Mammary epithelial cell (primary cell): ENCODE measurements at regions of chr11 and their contacts with region 1.

Region 1: GRCh38 chr11:112280268-112281126 is 19.8 kb upstream of the PLET1 start:
- DNase-seq: peak; percentile 68
- H3K4me3 ChIP-seq: peak overlapping the region; percentile 31 to 45 (median 39)
- H3K27ac ChIP-seq: no peak overlapping the region
- H3K4me1 ChIP-seq: peaks cover 12% of the 10 kb centered on the region
- H3K27me3 ChIP-seq: no peaks in the 10 kb centered on the region
- CTCF ChIP-seq: peak; percentile 74 to 86

Region 2: DNA sequence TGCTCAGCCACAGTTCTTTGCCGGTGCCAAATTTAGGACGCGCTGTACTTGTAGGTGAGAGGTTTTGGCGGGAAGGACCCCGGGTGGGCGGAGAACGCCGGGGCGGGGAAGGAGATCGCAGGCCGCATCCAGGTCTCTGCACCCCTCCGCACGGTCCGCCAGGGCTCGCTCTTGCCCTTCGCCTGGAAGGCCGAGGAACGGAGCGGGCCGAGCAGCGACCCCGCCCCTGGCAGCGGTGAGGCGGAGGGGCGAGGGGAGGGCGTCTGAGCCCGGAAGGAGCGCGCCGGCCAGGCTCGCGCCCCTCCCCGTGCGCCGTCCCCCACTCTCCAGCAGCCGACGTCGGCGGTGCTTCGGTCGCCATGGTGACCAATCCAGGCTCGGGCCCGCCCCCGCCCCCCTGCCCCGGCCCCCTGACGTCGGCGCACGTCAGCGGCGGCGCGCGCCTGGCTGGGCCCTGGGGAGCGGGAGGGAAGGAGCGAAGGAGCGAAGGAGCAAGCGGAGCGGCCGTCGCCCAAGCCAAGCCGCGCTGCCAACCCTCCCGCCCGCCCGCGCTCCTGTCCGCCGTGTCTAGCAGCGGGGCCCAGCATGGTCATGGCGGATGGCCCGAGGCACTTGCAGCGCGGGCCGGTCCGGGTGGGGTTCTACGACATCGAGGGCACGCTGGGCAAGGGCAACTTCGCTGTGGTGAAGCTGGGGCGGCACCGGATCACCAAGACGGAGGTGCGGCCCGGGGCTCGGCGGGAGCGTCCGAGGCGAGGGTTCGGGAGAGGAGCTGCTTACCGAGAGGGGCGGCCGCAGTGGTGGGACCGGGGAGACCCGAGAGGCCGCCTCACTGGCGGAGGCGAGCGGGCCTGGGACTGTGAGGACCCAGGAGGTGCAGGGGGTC is 678.3 kb before region 1 on chr11 and contains the start of gene SIK2:
- CTCF ChIA-PET with region 1: no interaction called
- dilution Hi-C with region 1: no loop called
- in situ Hi-C with region 1: no loop called
- intact Hi-C with region 1: loop called (anchors 5 kb)
- DNase-seq: peak; percentile 94
- H3K4me3 ChIP-seq: peak within 1 kb of the TSS; percentile 91 to 98 (median 98)
- H3K27ac ChIP-seq: peak within 1 kb of the TSS; percentile 94
- H3K4me1 ChIP-seq: peaks cover 21% of the 10 kb centered on the region
- H3K27me3 ChIP-seq: no peaks in the 10 kb centered on the region
- CTCF ChIP-seq: peak; percentile 79 to 97
- total RNA-seq, gene SIK2: 15.9 to 17.0 TPM

Region 3: GRCh38 chr11:111932611-111932950 is 347.9 kb before region 1 on chr11:
- CTCF ChIA-PET with region 1: interaction called, 3 read pairs
- dilution Hi-C with region 1: no loop called
- in situ Hi-C with region 1: no loop called
- intact Hi-C with region 1: loop called (anchors 2 kb)
- DNase-seq: no peak
- H3K4me3 ChIP-seq: no peak overlapping the region
- H3K27ac ChIP-seq: no peak overlapping the region
- H3K4me1 ChIP-seq: peaks cover 10% of the 10 kb centered on the region
- H3K27me3 ChIP-seq: no peaks in the 10 kb centered on the region
- CTCF ChIP-seq: no peak

Region 4: GRCh38 chr11:112113539-112114457 is 166.7 kb before region 1 on chr11:
- CTCF ChIA-PET with region 1: interaction called, 3 read pairs
- dilution Hi-C with region 1: no loop called
- in situ Hi-C with region 1: loop called in 1 of 2 experiments (anchors 10 kb)
- intact Hi-C with region 1: loop called (anchors 1 kb)
- DNase-seq: peak; percentile 54
- H3K4me3 ChIP-seq: no peak overlapping the region
- H3K27ac ChIP-seq: no peak overlapping the region
- H3K4me1 ChIP-seq: no peaks in the 10 kb centered on the region
- H3K27me3 ChIP-seq: no peaks in the 10 kb centered on the region
- CTCF ChIP-seq: peak; percentile 37 to 70

Region 5: DNA sequence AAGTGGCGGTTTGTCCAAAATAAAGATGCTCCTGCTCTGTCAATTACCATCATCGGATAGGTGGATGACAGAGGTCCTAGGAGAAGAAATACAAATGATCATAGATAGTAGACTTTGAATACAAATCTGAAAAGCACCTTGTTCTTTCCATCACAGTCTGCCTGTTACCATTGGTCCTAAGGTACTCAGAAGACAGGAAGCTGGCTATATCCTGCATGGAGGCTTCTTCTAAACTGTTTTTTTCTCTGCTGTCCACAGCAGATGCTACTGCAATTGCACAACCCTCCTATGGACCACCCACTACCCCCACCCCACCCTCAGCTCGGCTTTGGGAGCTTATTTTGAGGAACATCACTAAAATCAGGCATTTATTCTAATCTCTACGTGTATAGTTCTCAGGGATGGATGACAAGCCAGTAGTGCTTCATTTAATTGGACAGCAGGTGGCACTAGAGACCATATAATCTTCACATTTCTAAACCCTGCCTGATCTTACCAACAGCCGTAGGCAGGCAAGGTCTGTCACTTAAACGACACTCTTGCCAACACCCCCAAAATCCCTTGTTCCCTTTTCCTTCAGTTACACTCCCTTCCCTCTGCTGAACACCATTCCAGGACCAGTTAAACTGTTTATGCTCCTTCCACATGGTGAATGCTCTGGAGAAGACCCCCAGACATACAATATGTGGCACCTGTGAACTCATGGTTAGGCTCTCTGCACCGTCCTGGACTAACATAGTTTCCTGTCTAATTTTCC is 60.8 kb before region 1 on chr11:
- CTCF ChIA-PET with region 1: interaction called, 23 read pairs
- dilution Hi-C with region 1: loop called (anchors 5 kb)
- in situ Hi-C with region 1: loop called (anchors 5 kb)
- intact Hi-C with region 1: loop called (anchors 1 kb)
- DNase-seq: peak; percentile 53
- H3K4me3 ChIP-seq: no peak overlapping the region
- H3K27ac ChIP-seq: no peak overlapping the region
- H3K4me1 ChIP-seq: peaks cover 6% of the 10 kb centered on the region
- H3K27me3 ChIP-seq: no peaks in the 10 kb centered on the region
- CTCF ChIP-seq: peak; percentile 63 to 64

Region 6: DNA sequence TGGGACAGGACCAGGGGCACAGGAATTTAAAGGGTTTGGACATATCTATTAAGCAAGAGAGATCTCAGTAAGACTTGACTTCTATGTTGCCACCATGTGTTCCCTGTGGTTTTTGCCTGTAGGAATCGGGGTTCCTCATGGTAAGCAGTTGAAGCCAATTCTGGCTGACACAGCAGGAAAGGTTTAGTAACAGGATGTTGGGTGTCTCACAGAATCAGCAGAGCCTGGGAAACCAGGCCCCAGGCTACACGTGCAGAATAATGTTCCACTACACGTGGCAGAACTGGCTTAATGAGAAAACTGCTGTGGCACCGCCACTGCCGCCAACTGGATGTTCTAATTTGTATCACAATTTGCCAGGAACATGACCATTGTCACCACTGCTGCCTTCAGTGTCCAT is 244.8 kb after region 1 on chr11:
- CTCF ChIA-PET with region 1: interaction called, 11 read pairs
- dilution Hi-C with region 1: no loop called
- in situ Hi-C with region 1: no loop called
- intact Hi-C with region 1: no loop called
- DNase-seq: peak; percentile 35
- H3K4me3 ChIP-seq: no peak overlapping the region
- H3K27ac ChIP-seq: no peak overlapping the region
- H3K4me1 ChIP-seq: no peaks in the 10 kb centered on the region
- H3K27me3 ChIP-seq: peaks cover 1% of the 10 kb centered on the region
- CTCF ChIP-seq: no peak

Region 7: GRCh38 chr11:113289431-113290187 is 1009.1 kb after region 1 on chr11:
- CTCF ChIA-PET with region 1: no interaction called
- dilution Hi-C with region 1: no loop called
- in situ Hi-C with region 1: loop called in 1 of 2 experiments (anchors 25 kb)
- intact Hi-C with region 1: no loop called
- DNase-seq: peak; percentile 41
- H3K4me3 ChIP-seq: no peak overlapping the region
- H3K27ac ChIP-seq: no peak overlapping the region
- H3K4me1 ChIP-seq: no peaks in the 10 kb centered on the region
- H3K27me3 ChIP-seq: peaks cover 2% of the 10 kb centered on the region
- CTCF ChIP-seq: peak; percentile 97 to 99